ENCODE measurements at regions of chr13 and their contacts with region 1.

Region 1: DNA sequence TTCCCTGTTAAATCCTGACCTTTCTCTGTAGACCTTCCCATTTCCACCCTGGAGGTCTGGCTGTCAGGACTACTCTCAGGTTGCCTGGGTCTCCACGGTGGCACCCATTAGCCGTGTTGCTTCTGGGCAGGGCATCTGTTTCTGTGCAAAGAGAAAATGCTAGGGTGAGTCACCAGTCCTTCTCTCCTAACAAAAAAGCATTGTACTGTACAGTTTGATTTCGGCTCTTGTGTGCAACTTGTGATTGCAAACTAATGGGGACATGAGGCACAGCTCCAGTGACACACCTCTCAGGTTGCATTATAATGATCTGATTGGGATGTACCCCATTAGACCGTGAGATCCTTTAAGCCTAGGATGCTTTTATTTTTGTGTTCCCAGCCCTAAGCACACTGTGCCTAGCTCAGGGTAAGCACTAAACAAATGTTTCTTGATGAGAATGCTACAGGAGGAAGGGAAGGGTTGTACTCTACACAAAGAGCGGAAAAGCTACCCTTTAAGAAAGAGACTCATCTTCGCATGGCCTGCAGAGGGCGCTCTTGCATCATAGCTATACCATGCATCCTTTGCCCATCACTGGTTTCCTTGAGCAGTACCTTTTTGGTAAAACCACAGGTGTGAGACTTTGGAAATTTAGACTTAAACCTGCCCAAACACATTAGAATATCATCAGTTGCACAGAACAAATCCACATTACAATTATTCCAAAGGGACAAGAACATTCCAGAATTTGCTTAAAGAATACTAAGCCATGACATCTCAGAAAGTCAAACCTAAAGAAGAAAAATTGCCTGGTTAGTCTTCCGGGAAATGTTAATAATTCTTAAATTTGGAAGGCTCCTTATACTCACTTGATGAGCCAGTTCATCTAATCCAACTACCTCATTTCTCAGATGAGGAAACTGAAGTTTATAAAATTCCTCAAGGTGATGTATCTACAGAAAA is 20.3 kb upstream of the TRIM13 start:
- DNase-seq: peak; percentile 54 to 77 (median 66)
- ATAC-seq: peak; percentile 94
- H3K4me3 ChIP-seq: no peak overlapping the region
- H3K4me3 Mint-ChIP-seq: no peak overlapping the region
- H3K27ac ChIP-seq: no peak overlapping the region
- H3K27ac Mint-ChIP-seq: peak overlapping the region in 1 of 9 donors; percentile 38
- H3K4me1 ChIP-seq: no peaks in the 10 kb centered on the region
- H3K4me1 Mint-ChIP-seq: peaks cover 0 to 10% (median 0%) of the 10 kb centered on the region in 7 donors
- H3K27me3 ChIP-seq: no peaks in the 10 kb centered on the region
- H3K27me3 Mint-ChIP-seq: no peaks in the 10 kb centered on the region

Region 2: DNA sequence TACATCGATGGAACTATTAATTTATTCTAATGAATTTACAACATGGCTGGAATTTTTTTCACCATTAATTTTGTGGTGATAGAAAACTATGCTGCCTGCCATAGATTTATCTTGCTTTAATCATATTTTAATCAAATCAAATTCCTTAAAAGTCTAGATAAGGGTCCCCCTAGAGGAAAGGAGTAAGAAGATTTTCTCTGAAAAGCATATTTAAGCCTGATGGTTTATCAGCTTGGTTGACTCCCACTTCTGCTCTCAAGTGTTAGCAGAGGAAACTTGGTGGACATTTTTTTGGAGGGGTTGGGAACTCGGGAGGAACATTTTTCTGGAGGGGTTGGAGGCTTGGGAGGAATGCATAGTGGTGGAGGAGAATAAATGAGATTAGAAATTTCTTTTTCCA is 291.9 kb after region 1 on chr13:
- CTCF ChIA-PET with region 1: interaction called, 3 read pairs
- POLR2A ChIA-PET with region 1: no interaction called
- intact Hi-C with region 1: loop called in 1 of 2 experiments (anchors 1 kb)
- DNase-seq: no peak
- ATAC-seq: no peak
- H3K4me3 ChIP-seq: no peak overlapping the region
- H3K4me3 Mint-ChIP-seq: no peak overlapping the region
- H3K27ac ChIP-seq: no peak overlapping the region
- H3K27ac Mint-ChIP-seq: no peak overlapping the region
- H3K4me1 ChIP-seq: no peaks in the 10 kb centered on the region
- H3K4me1 Mint-ChIP-seq: no peaks in the 10 kb centered on the region
- H3K27me3 ChIP-seq: no peaks in the 10 kb centered on the region
- H3K27me3 Mint-ChIP-seq: peaks cover 0 to 52% (median 4%) of the 10 kb centered on the region in 5 donors

Region 3: DNA sequence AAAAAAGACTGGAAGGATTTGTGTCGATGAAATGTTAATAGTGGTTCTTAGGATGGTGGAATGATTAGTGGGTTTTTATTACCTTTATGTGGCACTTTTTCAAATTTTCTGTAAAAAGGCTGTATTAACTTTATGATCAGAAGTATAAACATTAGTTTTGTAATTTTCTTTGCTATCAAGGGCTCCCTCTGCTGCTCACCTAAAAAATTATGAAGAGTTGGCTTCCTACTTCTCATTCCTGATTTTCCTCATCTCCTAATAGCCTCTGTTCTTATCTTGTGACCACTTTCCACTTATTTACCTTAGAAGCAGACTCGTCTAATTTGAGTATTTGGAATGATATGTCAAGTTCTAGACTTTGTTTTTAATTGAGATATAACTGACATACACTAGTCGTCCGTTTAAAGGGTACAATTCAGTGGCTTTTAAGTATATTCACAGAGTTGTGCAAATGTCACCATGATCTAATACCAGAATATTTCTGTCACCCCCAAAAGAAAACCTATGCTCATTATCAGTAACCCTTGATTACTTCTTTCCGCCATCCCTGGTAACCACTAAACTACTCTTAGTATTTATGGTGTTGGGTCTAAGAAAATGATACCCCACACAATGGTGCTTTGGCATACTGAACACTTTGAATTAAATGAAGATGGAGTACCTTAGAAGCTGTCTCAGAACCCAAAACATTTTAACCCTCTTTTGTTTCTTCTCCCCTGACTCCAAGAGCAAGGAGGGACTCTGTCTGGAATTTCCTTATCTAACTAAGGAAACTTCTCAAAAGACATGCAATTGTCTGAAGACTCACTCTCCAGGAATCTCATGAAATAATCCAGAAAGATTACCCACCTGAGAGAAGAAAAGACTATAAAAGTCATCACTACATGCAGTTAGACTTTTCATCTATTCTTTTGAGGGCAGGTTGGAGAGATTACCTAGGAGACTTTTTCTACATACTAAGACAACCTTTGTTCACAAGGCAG is 555.6 kb after region 1 on chr13:
- CTCF ChIA-PET with region 1: interaction called, 5 read pairs
- POLR2A ChIA-PET with region 1: no interaction called
- intact Hi-C with region 1: loop called (anchors 1 kb)
- DNase-seq: no peak
- ATAC-seq: no peak
- H3K4me3 ChIP-seq: no peak overlapping the region
- H3K4me3 Mint-ChIP-seq: no peak overlapping the region
- H3K27ac ChIP-seq: no peak overlapping the region
- H3K27ac Mint-ChIP-seq: no peak overlapping the region
- H3K4me1 ChIP-seq: no peaks in the 10 kb centered on the region
- H3K4me1 Mint-ChIP-seq: peaks cover 9 to 28% (median 13%) of the 10 kb centered on the region in 7 donors
- H3K27me3 ChIP-seq: no peaks in the 10 kb centered on the region
- H3K27me3 Mint-ChIP-seq: peaks cover 0 to 17% (median 11%) of the 10 kb centered on the region in 5 donors

Region 4: DNA sequence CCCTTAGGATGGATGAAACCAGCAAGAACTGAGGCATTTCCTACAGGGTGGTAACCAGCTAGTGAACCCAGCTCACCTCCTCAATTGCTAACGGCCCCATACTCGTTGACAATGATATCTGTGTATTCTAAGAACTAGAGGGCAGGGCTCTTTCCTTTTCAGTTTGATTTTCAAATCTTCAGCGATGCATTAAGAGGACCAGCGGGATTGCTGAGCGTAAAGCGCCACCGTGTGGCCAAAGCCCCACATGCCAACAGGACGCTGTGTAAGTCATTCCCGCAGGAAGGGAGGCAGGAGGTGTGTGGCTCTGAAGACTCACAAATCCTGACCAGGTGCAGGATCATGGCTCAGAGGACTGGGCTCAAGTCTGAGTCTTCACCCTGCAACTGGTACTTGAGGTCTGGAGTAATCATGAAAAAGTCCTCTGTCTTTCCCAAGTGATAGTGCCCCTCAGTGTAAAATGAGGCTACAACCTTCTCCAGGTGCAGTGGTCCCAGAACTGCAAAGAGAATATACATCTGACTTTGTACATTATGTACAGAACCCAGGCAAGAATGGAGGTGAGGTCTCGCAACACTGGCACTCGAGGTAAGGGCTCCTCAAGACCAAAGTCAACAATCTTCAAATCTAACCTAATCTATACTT is 1093.5 kb after region 1 on chr13:
- CTCF ChIA-PET with region 1: interaction called, 13 read pairs
- POLR2A ChIA-PET with region 1: no interaction called
- intact Hi-C with region 1: loop called in 1 of 2 experiments (anchors 1 kb)
- DNase-seq: peak; percentile 43 to 75 (median 66)
- ATAC-seq: peak; percentile 83
- H3K4me3 ChIP-seq: no peak overlapping the region
- H3K4me3 Mint-ChIP-seq: peak overlapping the region in 2 of 10 donors; percentile 7 to 27
- H3K27ac ChIP-seq: no peak overlapping the region
- H3K27ac Mint-ChIP-seq: peak overlapping the region in 1 of 9 donors; percentile 76
- H3K4me1 ChIP-seq: no peaks in the 10 kb centered on the region
- H3K4me1 Mint-ChIP-seq: peaks cover 0 to 37% (median 7%) of the 10 kb centered on the region in 7 donors
- H3K27me3 ChIP-seq: no peaks in the 10 kb centered on the region
- H3K27me3 Mint-ChIP-seq: peaks cover 10 to 25% (median 16%) of the 10 kb centered on the region in 5 donors

Region 5: DNA sequence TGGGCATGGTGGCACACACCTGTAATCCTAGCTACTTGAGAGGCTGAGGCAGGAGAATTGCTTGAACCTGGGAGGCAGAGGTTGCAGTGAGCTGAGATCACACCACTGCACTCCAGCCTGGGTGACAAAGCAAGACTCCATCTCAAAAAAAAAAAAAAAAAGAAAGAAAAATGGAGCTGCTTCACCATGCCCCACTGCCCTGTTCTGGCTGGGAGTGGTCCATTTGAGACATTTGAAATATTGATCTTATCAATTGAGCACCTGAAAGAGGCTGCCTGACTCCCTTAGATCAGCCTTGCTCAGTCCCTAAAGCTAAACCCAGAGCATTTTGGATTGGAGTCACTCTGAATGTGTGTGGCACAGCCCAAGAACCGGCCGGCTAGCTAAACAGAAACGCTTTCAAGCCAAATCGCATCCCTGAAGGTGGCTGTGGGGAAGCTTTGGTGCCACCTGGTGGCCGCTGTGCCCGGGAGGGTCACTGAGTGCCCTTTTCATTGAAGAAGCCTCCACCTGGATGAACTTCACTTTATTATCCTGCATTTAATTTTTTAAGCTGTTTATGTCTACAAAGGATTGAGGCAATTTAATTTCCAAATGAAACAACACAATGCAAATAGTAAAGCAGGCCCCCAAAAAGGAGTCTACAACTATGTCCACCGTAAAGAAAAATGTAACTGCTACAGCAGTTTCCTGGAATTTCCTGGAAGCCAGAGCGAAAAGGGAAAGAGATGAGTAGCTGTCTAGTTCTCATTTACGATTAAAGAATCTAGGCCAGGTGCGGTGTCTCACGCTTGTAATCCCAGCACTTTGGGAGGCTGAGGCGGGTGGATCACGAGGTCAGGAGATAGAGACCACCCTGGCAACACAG is 1309.8 kb after region 1 on chr13:
- CTCF ChIA-PET with region 1: no interaction called
- POLR2A ChIA-PET with region 1: no interaction called
- intact Hi-C with region 1: loop called in 1 of 2 experiments (anchors 2 kb)
- DNase-seq: peak; percentile 11 to 77 (median 46)
- ATAC-seq: peak; percentile 76
- H3K4me3 ChIP-seq: no peak overlapping the region
- H3K4me3 Mint-ChIP-seq: no peak overlapping the region
- H3K27ac ChIP-seq: no peak overlapping the region
- H3K27ac Mint-ChIP-seq: no peak overlapping the region
- H3K4me1 ChIP-seq: no peaks in the 10 kb centered on the region
- H3K4me1 Mint-ChIP-seq: peaks cover 0 to 25% (median 0%) of the 10 kb centered on the region in 7 donors
- H3K27me3 ChIP-seq: no peaks in the 10 kb centered on the region
- H3K27me3 Mint-ChIP-seq: peaks cover 0 to 9% (median 0%) of the 10 kb centered on the region in 5 donors